Heart left ventricle (tissue), 16 donors: ENCODE measurements at regions of chr22 and their contacts with region 1.

Region 1: GRCh38 chr22:38069372-38070249 is 12.4 kb downstream of the PICK1 start:
- DNase-seq: peak; percentile 82 to 93 (median 85)
- ATAC-seq: peak; percentile 90 to 93 (median 92)
- H3K4me3 ChIP-seq: peak overlapping the region in 7 of 12 donors; percentile 7 to 37 (median 35)
- H3K27ac ChIP-seq: peak overlapping the region; percentile 74 to 91 (median 85)
- H3K4me1 ChIP-seq: peaks cover 0 to 44% (median 29%) of the 10 kb centered on the region in 12 donors
- H3K27me3 ChIP-seq: no peaks in the 10 kb centered on the region
- CTCF ChIP-seq: peak; percentile 37 to 78 (median 60)
- POLR2A ChIP-seq: no peak

Region 2: GRCh38 chr22:38148245-38148644 is 78.6 kb after region 1 on chr22:
- intact Hi-C with region 1: no loop called
- DNase-seq: no peak
- ATAC-seq: no peak
- H3K4me3 ChIP-seq: no peak overlapping the region
- H3K27ac ChIP-seq: no peak overlapping the region
- H3K4me1 ChIP-seq: peaks cover 0 to 14% (median 0%) of the 10 kb centered on the region in 12 donors
- H3K27me3 ChIP-seq: no peaks in the 10 kb centered on the region
- CTCF ChIP-seq: no peak
- POLR2A ChIP-seq: no peak

Region 3: GRCh38 chr22:38230108-38230825 is 160.7 kb after region 1 on chr22:
- intact Hi-C with region 1: loop called in 1 of 10 experiments (anchors 10 kb)
- DNase-seq: peak in 1 of 5 donors; percentile 50
- ATAC-seq: peak in 2 of 4 donors; percentile 16 to 22
- H3K4me3 ChIP-seq: no peak overlapping the region
- H3K27ac ChIP-seq: peak overlapping the region in 10 of 12 donors; percentile 8 to 70 (median 56)
- H3K4me1 ChIP-seq: peaks cover 0 to 51% (median 22%) of the 10 kb centered on the region in 12 donors
- H3K27me3 ChIP-seq: no peaks in the 10 kb centered on the region
- CTCF ChIP-seq: peak in 10 of 12 donors; percentile 25 to 53 (median 41)
- POLR2A ChIP-seq: no peak

Region 4: GRCh38 chr22:38327805-38328204 is 258.2 kb after region 1 on chr22:
- intact Hi-C with region 1: loop called in 1 of 10 experiments (anchors 10 kb)
- DNase-seq: no peak
- ATAC-seq: no peak
- H3K4me3 ChIP-seq: no peak overlapping the region
- H3K27ac ChIP-seq: no peak overlapping the region
- H3K4me1 ChIP-seq: no peaks in the 10 kb centered on the region
- H3K27me3 ChIP-seq: no peaks in the 10 kb centered on the region
- CTCF ChIP-seq: no peak
- POLR2A ChIP-seq: no peak

Region 5: DNA sequence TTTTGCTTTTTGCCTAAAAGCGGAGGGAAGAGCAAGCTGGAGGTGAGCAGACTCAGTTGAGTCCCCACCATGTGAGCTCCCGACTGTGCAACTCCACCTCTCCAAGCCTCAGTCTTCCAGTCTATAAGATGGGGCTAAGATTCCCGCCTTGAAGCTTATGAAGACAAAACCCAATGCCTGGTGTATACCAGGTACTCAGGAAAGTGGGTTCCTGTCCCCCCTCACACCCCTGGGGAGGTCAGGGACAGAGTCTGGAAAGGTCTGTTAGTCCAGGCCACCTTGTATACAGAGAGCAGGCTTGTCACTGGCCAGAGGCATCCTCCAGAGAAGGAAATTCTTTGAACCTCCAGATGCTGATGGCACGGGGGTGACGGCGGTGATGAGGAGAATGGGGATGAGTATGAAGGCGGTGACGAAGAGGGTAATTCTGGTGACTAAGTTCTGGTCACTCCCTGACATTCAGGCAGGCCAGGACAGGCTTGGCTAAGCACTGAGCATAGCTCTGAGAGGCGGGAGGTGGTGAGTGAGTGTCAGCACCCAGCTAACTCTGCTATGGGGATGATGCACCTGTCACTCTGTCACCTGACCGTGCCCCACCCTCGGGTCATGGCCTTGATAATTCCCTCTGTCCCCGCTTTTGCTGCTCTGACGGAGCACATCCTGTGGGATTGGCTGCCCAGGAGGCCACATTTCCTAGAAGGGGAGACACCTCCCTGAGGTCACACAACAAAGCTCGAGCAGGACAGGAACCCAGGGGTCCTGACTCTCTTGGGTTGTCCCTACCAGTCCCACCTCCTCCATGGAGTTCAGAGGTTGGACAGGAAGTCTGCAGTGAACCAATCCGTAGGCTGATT is 278.5 kb after region 1 on chr22:
- intact Hi-C with region 1: loop called in 1 of 10 experiments (anchors 10 kb)
- DNase-seq: peak in 1 of 5 donors; percentile 48
- ATAC-seq: peak in 2 of 4 donors; percentile 16 to 17
- H3K4me3 ChIP-seq: no peak overlapping the region
- H3K27ac ChIP-seq: no peak overlapping the region
- H3K4me1 ChIP-seq: peaks cover 0 to 7% (median 1%) of the 10 kb centered on the region in 12 donors
- H3K27me3 ChIP-seq: peaks cover 0 to 18% (median 0%) of the 10 kb centered on the region in 9 donors
- CTCF ChIP-seq: no peak
- POLR2A ChIP-seq: no peak

Region 6: DNA sequence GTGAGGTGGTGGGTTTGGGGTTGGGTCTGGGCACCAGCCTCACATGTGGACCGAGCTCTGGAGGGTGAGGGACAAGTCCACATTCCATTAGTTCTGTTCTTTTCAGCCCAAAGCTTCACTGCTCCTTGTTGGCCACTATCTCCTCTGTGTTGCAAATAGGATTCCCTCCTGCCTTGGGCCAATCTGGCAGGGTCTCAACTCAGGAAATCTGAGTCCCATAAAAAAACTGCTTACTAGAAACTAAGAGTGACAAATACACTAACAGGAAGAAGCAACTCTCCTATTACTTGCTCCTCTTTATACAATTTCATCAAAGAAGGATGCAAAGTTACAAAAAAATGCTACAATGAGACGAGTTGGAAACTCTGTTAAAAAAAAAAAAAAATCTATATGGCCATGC is 313.8 kb after region 1 on chr22:
- intact Hi-C with region 1: no loop called
- DNase-seq: no peak
- ATAC-seq: peak in 1 of 4 donors; percentile 9
- H3K4me3 ChIP-seq: no peak overlapping the region
- H3K27ac ChIP-seq: no peak overlapping the region
- H3K4me1 ChIP-seq: peaks cover 0 to 45% (median 12%) of the 10 kb centered on the region in 12 donors
- H3K27me3 ChIP-seq: no peaks in the 10 kb centered on the region
- CTCF ChIP-seq: no peak
- POLR2A ChIP-seq: no peak

Region 7: GRCh38 chr22:38674888-38675287 is 605.3 kb after region 1 on chr22:
- intact Hi-C with region 1: loop called in 1 of 10 experiments (anchors 10 kb)
- DNase-seq: no peak
- ATAC-seq: peak; percentile 18 to 53 (median 32)
- H3K4me3 ChIP-seq: no peak overlapping the region
- H3K27ac ChIP-seq: peak overlapping the region in 1 of 12 donors; percentile 25
- H3K4me1 ChIP-seq: no peaks in the 10 kb centered on the region
- H3K27me3 ChIP-seq: no peaks in the 10 kb centered on the region
- CTCF ChIP-seq: no peak
- POLR2A ChIP-seq: no peak